Activated CD8-positive, alpha-beta T cell treated with anti-CD3 and anti-CD28 coated beads for 36 hours (primary cell): ENCODE measurements at regions of chr7 and their contacts with region 1.

Region 1: DNA sequence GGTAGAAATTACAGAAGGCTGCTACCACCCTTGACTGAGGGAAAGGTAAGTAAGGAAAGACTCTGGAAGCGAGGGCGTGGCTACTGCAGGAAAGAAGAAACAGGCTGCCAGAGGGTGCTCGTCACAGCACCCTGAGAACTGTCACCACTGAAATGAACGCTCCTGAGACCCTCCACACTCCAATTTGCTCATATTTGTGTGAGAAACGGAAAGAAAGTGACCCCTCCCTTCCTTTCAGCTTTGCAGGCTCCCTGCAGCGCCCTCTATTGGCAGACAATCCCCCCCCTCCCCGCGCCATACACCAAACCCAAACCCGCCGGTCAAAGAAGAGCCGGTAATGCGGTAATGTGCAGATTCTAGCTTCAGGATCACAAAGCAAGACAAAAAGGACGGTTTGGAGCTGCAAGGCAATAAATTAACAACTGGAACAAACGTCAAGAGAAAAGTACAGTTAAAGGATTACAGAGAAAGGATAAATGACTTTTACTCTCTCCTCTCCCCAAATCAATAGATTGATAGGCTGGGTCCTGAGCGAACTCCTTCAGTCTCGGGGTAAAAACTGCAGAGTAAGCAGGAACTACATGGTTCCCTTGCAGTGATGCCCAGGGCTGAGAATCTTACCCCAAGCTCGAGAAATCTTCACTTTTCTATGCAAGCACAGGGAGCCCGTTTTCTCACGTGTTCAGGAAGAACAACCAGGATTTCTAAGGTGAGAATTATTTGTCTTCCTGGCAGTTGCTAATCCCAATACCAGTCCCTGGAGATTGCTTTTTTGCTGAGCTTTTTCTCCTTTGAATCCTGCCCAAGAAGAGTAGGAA is 47.6 kb downstream of the STEAP1B start:
- DNase-seq: peak; percentile 74
- ATAC-seq: peak; percentile 49
- H3K4me3 Mint-ChIP-seq: no peak overlapping the region
- H3K27ac Mint-ChIP-seq: no peak overlapping the region
- H3K4me1 Mint-ChIP-seq: peaks cover 8% of the 10 kb centered on the region
- H3K27me3 Mint-ChIP-seq: peaks cover 38% of the 10 kb centered on the region
- CTCF ChIP-seq: peak; percentile 74

Region 2: DNA sequence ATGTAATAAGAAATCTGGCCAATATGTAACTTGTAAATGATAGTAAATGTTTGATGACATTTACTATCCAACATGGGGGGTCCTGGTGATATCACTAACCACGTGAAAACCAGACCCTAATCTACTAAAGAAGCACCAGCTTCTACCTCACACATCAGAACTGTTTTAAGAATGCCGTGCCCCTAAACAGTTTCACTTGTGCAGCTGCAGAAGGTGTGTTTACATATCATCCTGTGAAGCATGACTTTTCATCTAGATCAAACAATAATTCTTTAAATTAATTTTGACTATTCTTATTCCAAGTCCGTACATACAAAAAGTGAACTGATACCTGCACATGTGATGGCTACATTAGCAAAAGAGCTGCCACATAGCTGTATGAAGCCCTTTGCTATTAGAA is 13.4 kb before region 1 on chr7:
- CTCF ChIA-PET with region 1: interaction called, 12 read pairs
- POLR2A ChIA-PET with region 1: no interaction called
- intact Hi-C with region 1: no loop called
- DNase-seq: no peak
- ATAC-seq: no peak
- H3K4me3 Mint-ChIP-seq: no peak overlapping the region
- H3K27ac Mint-ChIP-seq: no peak overlapping the region
- H3K4me1 Mint-ChIP-seq: peaks cover 2% of the 10 kb centered on the region
- H3K27me3 Mint-ChIP-seq: peaks cover 3% of the 10 kb centered on the region
- CTCF ChIP-seq: no peak

Region 3: DNA sequence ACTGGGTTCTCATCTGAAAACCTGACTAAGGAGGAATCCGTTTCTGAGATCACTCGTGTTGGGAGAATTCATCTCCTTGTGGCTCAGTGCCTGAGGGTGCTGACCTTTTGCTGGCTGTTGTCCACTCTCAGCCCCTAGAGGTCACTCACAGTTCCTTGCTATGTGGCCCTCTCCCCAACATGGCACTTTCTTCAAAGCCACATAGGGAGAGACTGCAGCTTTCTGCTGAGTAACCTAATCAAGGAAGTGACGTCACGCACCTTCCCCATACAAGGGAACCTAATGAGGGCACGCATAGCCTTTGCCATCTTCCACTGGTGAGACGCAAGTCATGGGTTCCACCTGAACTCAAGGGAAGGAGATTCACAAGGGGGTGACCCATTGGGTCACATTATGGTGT is 24.5 kb after region 1 on chr7:
- CTCF ChIA-PET with region 1: no interaction called
- POLR2A ChIA-PET with region 1: no interaction called
- intact Hi-C with region 1: no loop called
- DNase-seq: no peak
- ATAC-seq: no peak
- H3K4me3 Mint-ChIP-seq: no peak overlapping the region
- H3K27ac Mint-ChIP-seq: no peak overlapping the region
- H3K4me1 Mint-ChIP-seq: no peaks in the 10 kb centered on the region
- H3K27me3 Mint-ChIP-seq: no peaks in the 10 kb centered on the region
- CTCF ChIP-seq: no peak